Pancreas (tissue), 10 donors: ENCODE measurements at regions of chr3 and their contacts with region 1.

Region 1: DNA sequence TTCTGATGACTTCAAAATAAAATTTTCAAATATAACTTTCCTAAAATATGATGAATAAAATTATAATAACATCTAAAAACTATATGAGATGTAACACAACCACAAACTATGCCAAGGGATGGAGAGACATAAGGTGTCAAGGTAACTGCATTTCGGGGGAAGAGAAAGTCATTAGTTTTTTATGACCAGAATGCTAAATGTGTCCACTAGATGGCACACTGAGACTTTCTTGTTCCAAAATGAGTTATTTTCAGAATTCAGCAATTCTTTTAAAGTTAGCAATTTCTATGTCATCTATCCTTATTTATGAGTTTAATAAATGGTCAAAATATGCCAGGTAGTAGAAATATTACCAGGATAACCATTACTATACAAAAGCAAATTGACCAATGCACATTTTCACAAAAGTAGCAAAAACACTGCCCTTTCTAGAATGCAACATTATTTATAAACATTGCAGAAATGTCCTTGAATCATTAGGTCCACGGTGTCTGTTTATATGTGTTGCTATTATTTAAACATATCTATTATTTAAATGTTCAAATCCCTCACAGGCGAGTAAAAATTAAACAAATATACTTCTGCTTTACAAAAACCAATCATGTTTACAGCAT is 374.2 kb downstream of the PLCL2 start:
- DNase-seq: no peak
- ATAC-seq: peak in 2 of 4 donors; percentile 44 to 47
- H3K4me3 ChIP-seq: no peak overlapping the region
- H3K27ac ChIP-seq: no peak overlapping the region
- H3K4me1 ChIP-seq: peaks cover 0 to 6% (median 3%) of the 10 kb centered on the region in 3 donors
- H3K27me3 ChIP-seq: no peaks in the 10 kb centered on the region
- CTCF ChIP-seq: peak; percentile 25 to 67 (median 59)

Region 2: GRCh38 chr3:17140670-17141505 is 118.0 kb before region 1 on chr3:
- intact Hi-C with region 1: no loop called
- DNase-seq: peak in 1 of 6 donors; percentile 25
- ATAC-seq: no peak
- H3K4me3 ChIP-seq: no peak overlapping the region
- H3K27ac ChIP-seq: no peak overlapping the region
- H3K4me1 ChIP-seq: no peaks in the 10 kb centered on the region
- H3K27me3 ChIP-seq: no peaks in the 10 kb centered on the region
- CTCF ChIP-seq: no peak

Region 3: DNA sequence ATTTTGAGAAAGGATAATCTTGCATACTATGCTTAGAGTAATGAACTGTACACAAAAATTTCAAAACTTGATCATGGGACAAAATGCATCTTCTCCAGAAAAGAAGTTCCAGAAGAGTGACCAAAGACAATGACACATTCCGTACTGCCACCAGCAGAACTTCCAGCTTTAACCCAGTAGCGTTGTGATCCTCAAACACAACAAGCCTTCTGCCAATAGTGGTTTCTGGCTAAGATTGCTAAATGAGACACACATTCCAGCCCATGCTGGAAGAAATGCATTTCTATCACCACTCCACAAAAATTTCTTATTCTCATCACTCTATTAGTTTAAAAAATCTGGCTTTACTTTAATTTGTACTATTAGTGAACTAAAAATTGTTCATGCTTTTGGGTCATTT is 148.6 kb after region 1 on chr3:
- intact Hi-C with region 1: loop called in 2 of 3 experiments (anchors 10 kb)
- DNase-seq: no peak
- ATAC-seq: no peak
- H3K4me3 ChIP-seq: no peak overlapping the region
- H3K27ac ChIP-seq: no peak overlapping the region
- H3K4me1 ChIP-seq: no peaks in the 10 kb centered on the region
- H3K27me3 ChIP-seq: no peaks in the 10 kb centered on the region
- CTCF ChIP-seq: no peak

Region 4: DNA sequence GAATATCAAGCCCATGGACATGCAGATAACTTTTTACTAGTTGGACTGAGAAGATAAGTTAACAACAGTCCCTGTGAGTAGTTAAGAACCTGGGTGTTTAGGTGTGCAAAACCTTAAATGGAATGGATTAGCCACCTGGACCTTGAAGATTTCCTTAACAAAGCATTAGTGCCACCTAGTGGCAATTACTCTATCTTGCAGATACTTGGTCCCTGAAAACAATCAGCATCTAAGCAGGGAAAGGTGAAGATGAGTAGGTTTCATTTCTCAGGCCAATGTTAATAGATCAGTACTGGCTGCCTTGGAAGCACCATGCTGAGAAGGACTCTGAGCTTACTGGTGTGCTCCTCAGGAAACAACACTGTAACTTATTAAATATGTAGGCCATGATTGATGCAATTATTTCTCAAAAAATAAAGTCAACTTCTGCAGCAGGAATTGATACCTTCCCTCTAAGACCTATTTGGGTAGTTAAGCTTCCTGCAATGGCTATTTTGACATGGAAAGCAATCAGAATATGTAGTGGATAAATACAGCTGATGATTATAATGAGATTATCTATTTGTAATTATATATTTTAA is 154.1 kb after region 1 on chr3:
- intact Hi-C with region 1: loop called in 2 of 3 experiments (anchors 10 kb)
- DNase-seq: peak in 1 of 6 donors; percentile 13
- ATAC-seq: peak; percentile 58 to 89 (median 84)
- H3K4me3 ChIP-seq: no peak overlapping the region
- H3K27ac ChIP-seq: no peak overlapping the region
- H3K4me1 ChIP-seq: no peaks in the 10 kb centered on the region
- H3K27me3 ChIP-seq: no peaks in the 10 kb centered on the region
- CTCF ChIP-seq: peak; percentile 46 to 79 (median 65)